ENCODE measurements at regions of chr2 and their contacts with region 1.

Region 1: GRCh38 chr2:68487773-68488355 is 20.5 kb downstream of the APLF start:
- DNase-seq: peak in 3 of 14 experiments; percentile 48 to 54 (median 52)
- ATAC-seq: peak; percentile 55
- H3K4me3 ChIP-seq: no peak overlapping the region
- H3K4me3 Mint-ChIP-seq: no peak overlapping the region
- H3K27ac ChIP-seq: no peak overlapping the region
- H3K27ac Mint-ChIP-seq: no peak overlapping the region
- H3K4me1 ChIP-seq: no peaks in the 10 kb centered on the region
- H3K4me1 Mint-ChIP-seq: peaks cover 5% of the 10 kb centered on the region
- H3K27me3 ChIP-seq: no peaks in the 10 kb centered on the region
- H3K27me3 Mint-ChIP-seq: no peaks in the 10 kb centered on the region
- CTCF ChIP-seq: peak; percentile 62

Region 2: DNA sequence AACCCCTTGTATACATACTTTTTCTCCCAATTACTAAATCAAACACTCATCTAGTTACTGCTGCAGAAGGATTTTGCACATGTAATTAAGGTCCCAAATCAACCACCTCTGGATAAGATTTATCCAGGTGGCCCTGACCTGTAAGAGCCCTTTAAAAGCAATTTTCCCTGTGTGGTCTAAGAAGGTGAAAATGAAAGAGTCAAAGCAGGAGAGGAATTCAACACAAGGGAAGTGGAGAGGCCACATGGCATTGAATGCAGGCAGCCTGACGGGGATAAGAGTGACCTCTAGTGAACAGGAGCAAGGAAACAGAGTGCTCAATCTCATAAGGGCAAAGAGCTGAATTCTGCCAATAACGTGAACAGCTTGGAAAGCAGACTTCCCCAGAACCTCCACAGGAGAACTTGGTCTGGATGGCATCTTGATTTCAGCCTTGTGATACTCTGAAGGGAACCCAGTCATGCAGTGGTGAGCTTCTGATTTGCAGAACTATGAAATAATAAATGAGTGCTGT is 262.7 kb before region 1 on chr2:
- CTCF ChIA-PET with region 1: no interaction called
- POLR2A ChIA-PET with region 1: no interaction called
- intact Hi-C with region 1: no loop called
- DNase-seq: peak in 8 of 14 experiments; percentile 6 to 66 (median 38)
- ATAC-seq: peak; percentile 68
- H3K4me3 ChIP-seq: no peak overlapping the region
- H3K4me3 Mint-ChIP-seq: peak overlapping the region; percentile 47
- H3K27ac ChIP-seq: no peak overlapping the region
- H3K27ac Mint-ChIP-seq: peak overlapping the region; percentile 16
- H3K4me1 ChIP-seq: peaks cover 21% of the 10 kb centered on the region
- H3K4me1 Mint-ChIP-seq: peaks cover 99% of the 10 kb centered on the region
- H3K27me3 ChIP-seq: no peaks in the 10 kb centered on the region
- H3K27me3 Mint-ChIP-seq: no peaks in the 10 kb centered on the region
- CTCF ChIP-seq: no peak

Region 3: GRCh38 chr2:68594674-68595492 is 107.0 kb after region 1 on chr2:
- CTCF ChIA-PET with region 1: interaction called, 6 read pairs
- POLR2A ChIA-PET with region 1: interaction called, 5 read pairs
- intact Hi-C with region 1: loop called in 1 of 2 experiments (anchors 5 kb)
- DNase-seq: peak; percentile 22 to 76 (median 40)
- ATAC-seq: peak; percentile 60
- H3K4me3 ChIP-seq: no peak overlapping the region
- H3K4me3 Mint-ChIP-seq: no peak overlapping the region
- H3K27ac ChIP-seq: no peak overlapping the region
- H3K27ac Mint-ChIP-seq: no peak overlapping the region
- H3K4me1 ChIP-seq: peaks cover 5% of the 10 kb centered on the region
- H3K4me1 Mint-ChIP-seq: peaks cover 6% of the 10 kb centered on the region
- H3K27me3 ChIP-seq: no peaks in the 10 kb centered on the region
- H3K27me3 Mint-ChIP-seq: peaks cover 9% of the 10 kb centered on the region
- CTCF ChIP-seq: peak; percentile 90

Region 4: GRCh38 chr2:68709421-68709911 is 221.6 kb after region 1 on chr2:
- CTCF ChIA-PET with region 1: interaction called, 5 read pairs
- POLR2A ChIA-PET with region 1: no interaction called
- intact Hi-C with region 1: loop called in 1 of 2 experiments (anchors 5 kb)
- DNase-seq: peak in 4 of 14 experiments; percentile 36 to 62 (median 58)
- ATAC-seq: peak; percentile 77
- H3K4me3 ChIP-seq: no peak overlapping the region
- H3K4me3 Mint-ChIP-seq: no peak overlapping the region
- H3K27ac ChIP-seq: no peak overlapping the region
- H3K27ac Mint-ChIP-seq: no peak overlapping the region
- H3K4me1 ChIP-seq: peaks cover 6% of the 10 kb centered on the region
- H3K4me1 Mint-ChIP-seq: peaks cover 28% of the 10 kb centered on the region
- H3K27me3 ChIP-seq: no peaks in the 10 kb centered on the region
- H3K27me3 Mint-ChIP-seq: no peaks in the 10 kb centered on the region
- CTCF ChIP-seq: peak; percentile 92

Region 5: GRCh38 chr2:69306822-69307578 is 819.1 kb after region 1 on chr2:
- CTCF ChIA-PET with region 1: no interaction called
- POLR2A ChIA-PET with region 1: no interaction called
- intact Hi-C with region 1: no loop called
- DNase-seq: peak; percentile 30 to 74 (median 46)
- ATAC-seq: peak; percentile 81
- H3K4me3 ChIP-seq: peak overlapping the region; percentile 56
- H3K4me3 Mint-ChIP-seq: peak overlapping the region; percentile 58
- H3K27ac ChIP-seq: no peak overlapping the region
- H3K27ac Mint-ChIP-seq: no peak overlapping the region
- H3K4me1 ChIP-seq: peaks cover 31% of the 10 kb centered on the region
- H3K4me1 Mint-ChIP-seq: peaks cover 31% of the 10 kb centered on the region
- H3K27me3 ChIP-seq: peaks cover 18 to 29% of the 10 kb centered on the region in 2 experiments
- H3K27me3 Mint-ChIP-seq: peaks cover 32% of the 10 kb centered on the region
- CTCF ChIP-seq: peak; percentile 79